Activated naive CD4-positive, alpha-beta T cell treated with anti-CD3 and anti-CD28 coated beads for 36 hours (primary cell): ENCODE measurements at regions of chr6 and their contacts with region 1.

Region 1: DNA sequence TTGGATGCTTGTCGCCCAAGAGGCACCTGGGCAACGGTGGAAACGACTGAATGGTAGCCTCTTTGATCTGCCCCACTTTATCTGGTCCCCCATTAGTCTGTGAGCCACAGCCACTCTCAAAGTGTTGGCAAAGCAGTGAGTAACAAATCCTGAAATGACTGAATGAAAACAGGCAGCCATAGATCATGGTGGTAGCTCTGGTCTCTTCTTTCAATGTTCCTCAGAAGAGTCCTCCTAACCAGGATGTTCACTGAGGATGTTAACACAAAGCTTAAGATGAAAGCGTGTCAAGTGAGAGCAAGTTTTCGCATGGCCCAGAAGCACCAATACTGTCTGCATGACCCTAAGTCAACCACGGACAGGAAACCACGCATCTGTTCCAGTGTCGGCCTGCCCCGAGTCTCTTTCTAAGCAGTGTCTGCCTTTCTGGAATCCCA is 107.3 kb downstream of the IRF4 start:
- DNase-seq: peak; percentile 80
- H3K4me3 Mint-ChIP-seq: peak overlapping the region; percentile 56
- H3K27ac Mint-ChIP-seq: peak overlapping the region; percentile 96
- H3K4me1 Mint-ChIP-seq: peaks cover 83% of the 10 kb centered on the region
- H3K27me3 Mint-ChIP-seq: no peaks in the 10 kb centered on the region

Region 2: DNA sequence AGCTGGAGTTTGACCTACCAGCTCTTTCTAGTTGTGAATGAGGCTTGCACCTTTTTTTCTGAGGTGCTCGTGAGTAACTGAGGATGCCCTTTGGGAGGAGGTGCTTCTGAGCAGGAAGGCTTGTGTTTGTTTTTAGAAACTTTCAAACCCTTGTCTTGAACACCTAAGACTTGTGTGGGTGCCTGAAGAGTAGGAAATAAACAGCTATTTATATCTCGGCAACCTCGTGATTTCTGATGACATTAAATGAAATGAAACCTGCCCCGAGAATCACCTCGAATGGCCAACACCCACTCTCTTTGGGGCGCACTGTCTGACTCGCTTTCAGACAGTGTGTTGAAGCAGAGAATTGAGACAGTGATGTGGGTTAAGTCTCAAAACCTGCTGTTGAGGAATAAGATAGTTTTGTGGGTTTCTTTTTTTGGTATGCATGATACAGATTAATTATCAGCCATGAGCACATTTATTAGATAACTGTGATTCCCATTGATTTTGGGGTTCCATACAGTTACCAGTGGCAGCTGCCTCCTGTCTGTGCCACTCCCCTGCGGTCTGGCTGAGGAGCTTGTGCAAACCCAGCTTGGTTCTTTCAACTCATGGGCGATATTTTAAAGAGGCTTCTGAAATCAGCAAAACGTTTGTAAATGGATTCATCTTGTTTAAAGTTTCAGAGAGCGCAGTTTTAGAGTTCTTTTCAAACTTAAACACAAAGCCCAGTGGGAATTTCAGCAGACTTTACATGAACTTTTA is 98.9 kb before region 1 on chr6:
- CTCF ChIA-PET with region 1: interaction called, 3 read pairs
- intact Hi-C with region 1: loop called (anchors 1 kb)
- DNase-seq: peak; percentile 73
- H3K4me3 Mint-ChIP-seq: peak overlapping the region; percentile 56
- H3K27ac Mint-ChIP-seq: peak overlapping the region; percentile 89
- H3K4me1 Mint-ChIP-seq: peaks cover 91% of the 10 kb centered on the region
- H3K27me3 Mint-ChIP-seq: no peaks in the 10 kb centered on the region

Region 3: GRCh38 chr6:484086-484745 is 14.6 kb before region 1 on chr6:
- CTCF ChIA-PET with region 1: interaction called, 17 read pairs
- intact Hi-C with region 1: loop called (anchors 1 kb)
- DNase-seq: peak; percentile 83
- H3K4me3 Mint-ChIP-seq: peak overlapping the region; percentile 35
- H3K27ac Mint-ChIP-seq: peak overlapping the region; percentile 99
- H3K4me1 Mint-ChIP-seq: peaks cover 87% of the 10 kb centered on the region
- H3K27me3 Mint-ChIP-seq: no peaks in the 10 kb centered on the region

Region 4: DNA sequence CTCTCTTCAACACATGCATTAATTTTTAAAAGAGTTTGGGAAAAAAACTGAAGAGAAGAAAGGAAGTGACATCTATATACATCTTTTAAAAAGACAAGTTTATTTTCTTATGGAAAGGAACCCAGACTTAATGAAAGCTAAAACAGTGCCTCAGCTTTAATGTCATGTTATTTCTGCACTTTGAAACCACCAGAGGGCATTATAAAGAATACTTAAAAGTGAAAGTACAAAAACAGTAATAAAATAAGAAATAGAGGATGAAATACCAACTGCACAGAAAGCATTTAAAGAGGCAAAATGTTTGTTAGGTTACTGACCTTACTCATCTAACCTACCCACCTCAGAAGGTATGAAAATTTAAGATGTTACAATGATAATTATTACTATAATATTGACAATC is 59.3 kb after region 1 on chr6:
- CTCF ChIA-PET with region 1: interaction called, 4 read pairs
- intact Hi-C with region 1: loop called (anchors 2 kb)
- DNase-seq: no peak
- H3K4me3 Mint-ChIP-seq: no peak overlapping the region
- H3K27ac Mint-ChIP-seq: peak overlapping the region; percentile 59
- H3K4me1 Mint-ChIP-seq: peaks cover 51% of the 10 kb centered on the region
- H3K27me3 Mint-ChIP-seq: no peaks in the 10 kb centered on the region

Region 5: GRCh38 chr6:710601-711571 is 212.1 kb after region 1 on chr6:
- CTCF ChIA-PET with region 1: no interaction called
- intact Hi-C with region 1: loop called (anchors 10 kb)
- DNase-seq: peak; percentile 64
- H3K4me3 Mint-ChIP-seq: peak overlapping the region; percentile 89
- H3K27ac Mint-ChIP-seq: peak overlapping the region; percentile 92
- H3K4me1 Mint-ChIP-seq: peaks cover 21% of the 10 kb centered on the region
- H3K27me3 Mint-ChIP-seq: peaks cover 4% of the 10 kb centered on the region